MCF 10A (cell line): ENCODE measurements at regions of chr6 and their contacts with region 1.

Region 1: DNA sequence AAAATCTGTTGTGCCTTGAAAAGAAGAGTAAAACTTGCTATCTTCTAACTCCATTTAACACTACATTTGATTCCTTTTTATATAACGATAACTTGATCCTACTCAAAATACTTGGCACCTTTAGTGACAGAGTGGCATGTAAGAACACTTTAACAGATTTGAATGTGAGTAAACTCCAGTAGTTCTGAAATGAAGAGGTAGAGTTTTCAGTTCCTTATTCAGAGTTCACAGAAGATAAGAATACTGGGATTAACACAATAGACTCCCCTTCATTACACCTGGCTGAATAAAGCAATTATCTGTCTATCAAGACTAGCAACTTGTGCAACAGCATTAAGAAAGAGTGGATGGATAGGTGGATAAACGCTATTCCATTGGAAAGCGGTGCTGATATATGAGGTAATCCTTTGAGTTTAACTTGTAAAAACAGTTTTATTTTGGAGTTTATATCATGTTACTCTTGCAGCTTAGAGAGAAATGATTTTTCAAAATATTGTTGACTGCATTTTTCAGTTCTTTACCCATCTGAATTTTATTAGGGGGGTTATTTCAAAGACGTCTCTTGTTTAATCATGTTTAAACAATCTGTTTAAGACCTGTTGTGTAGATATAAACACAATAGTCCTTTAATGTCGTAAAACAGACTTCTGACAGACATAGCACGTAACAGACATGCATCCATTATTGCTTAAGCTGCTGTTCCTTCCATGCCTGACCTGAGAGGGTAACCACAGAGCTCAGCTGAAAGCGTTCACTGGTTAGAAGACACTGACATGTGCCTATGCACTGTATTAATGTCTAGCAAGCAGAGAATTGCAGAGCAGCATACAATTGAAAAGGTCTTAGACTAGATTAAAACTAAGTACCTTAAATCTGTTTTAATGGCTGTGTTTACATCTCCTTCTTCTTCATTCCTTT is 102.4 kb upstream of the SUPT3H start:
- DNase-seq: peak; percentile 70
- H3K4me3 Mint-ChIP-seq: no peak overlapping the region
- H3K27ac Mint-ChIP-seq: no peak overlapping the region
- H3K4me1 Mint-ChIP-seq: peaks cover 10% of the 10 kb centered on the region
- H3K27me3 Mint-ChIP-seq: no peaks in the 10 kb centered on the region
- CTCF ChIP-seq: no peak

Region 2: DNA sequence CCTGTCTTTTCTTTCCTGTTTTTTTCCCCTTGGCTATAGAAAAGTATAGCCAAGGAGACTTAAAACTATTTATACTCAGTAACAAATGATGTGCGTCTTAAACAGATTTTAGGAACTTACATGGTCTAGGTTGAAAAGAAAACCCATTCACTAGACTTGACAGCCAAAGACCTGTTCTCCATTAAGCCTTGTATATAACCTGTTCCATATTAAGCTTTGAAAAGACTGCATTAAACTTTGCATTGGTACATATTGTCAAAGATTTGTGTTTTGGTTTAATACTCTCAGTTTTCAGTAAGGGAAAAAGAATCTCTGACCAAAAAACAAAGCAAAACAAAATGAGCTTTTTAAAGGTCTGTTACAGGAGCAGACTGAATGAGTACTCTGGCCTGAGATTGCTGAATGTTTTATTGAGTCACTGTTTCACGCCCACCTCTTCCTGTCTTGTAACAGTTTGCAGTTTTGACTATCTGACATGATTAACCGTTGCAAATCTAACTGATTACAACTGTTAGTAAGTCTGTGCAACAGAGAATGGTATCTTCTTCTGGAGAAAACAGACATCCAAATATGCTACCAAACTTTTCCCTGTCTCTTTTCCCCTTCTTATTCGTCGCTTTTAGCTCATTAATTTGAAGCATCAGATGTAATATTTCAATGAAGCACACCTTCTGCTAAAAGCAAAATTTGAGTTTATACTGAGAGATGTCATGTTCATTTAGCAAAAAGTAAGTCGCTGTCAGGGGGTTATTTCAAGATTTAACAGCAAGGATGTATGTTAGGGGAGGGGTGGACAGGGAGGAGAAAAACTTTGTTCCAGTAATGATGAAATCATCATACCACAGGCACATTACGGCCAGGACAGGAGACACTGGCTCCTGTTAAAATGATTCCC is 43.3 kb before region 1 on chr6:
- CTCF ChIA-PET with region 1: interaction called, 3 read pairs
- POLR2A ChIA-PET with region 1: interaction called, 3 read pairs
- intact Hi-C with region 1: loop called (anchors 1 kb)
- DNase-seq: peak; percentile 78
- H3K4me3 Mint-ChIP-seq: peak overlapping the region; percentile 32
- H3K27ac Mint-ChIP-seq: peak overlapping the region; percentile 39
- H3K4me1 Mint-ChIP-seq: peaks cover 46% of the 10 kb centered on the region
- H3K27me3 Mint-ChIP-seq: no peaks in the 10 kb centered on the region
- CTCF ChIP-seq: no peak